WTC11 (cell line): ENCODE measurements at regions of chr15 and their contacts with region 1.

Region 1: GRCh38 chr15:57375827-57376695 is at the start of gene CGNL1:
- DNase-seq: peak; percentile 69
- ATAC-seq: peak; percentile 67
- H3K4me3 Mint-ChIP-seq: peak within 1 kb of the TSS; percentile 90
- H3K27ac Mint-ChIP-seq: peak within 1 kb of the TSS; percentile 94; the same call in 1 of the 2 replicates
- H3K4me1 Mint-ChIP-seq: peaks cover 53% of the 10 kb centered on the region
- H3K27me3 Mint-ChIP-seq: peaks cover 30% of the 10 kb centered on the region
- CTCF ChIP-seq: no peak
- total RNA-seq, gene CGNL1: 57.3 to 69.5 TPM (median 67.1 TPM) in 3 replicates

Region 2: DNA sequence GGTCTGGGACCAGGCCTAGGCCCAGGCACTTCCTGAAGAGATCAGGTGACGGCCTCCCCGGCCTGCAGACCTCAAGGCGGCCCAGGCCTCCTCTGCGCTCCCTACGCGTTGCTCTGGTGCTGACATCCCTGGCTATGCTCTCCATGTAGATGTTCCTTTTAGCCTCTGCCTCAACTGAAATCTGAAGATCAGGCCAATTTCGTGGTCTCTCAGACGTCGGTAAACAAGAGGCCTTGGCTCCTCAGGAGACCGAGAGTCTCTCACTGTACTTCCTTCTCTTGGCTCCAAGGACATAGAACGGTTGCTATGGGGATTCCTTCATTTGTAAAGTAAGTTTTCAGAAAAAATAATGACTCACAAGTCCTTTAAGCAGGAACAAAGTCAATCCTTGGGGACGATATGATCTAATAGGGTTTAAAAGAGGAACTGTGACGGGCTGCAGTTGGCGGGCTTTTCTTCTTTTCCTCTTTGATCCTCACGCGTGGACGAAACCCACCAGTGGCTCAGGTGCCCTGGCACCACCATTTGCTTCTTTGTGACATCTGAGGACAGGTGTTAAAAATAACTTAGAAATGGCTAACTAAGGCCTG is 55.3 kb before region 1 on chr15:
- CTCF ChIA-PET with region 1: no interaction called
- POLR2A ChIA-PET with region 1: no interaction called
- DNase-seq: no peak
- ATAC-seq: peak; percentile 17; the same call in 1 of the 2 replicates
- H3K4me3 Mint-ChIP-seq: no peak overlapping the region
- H3K27ac Mint-ChIP-seq: no peak overlapping the region
- H3K4me1 Mint-ChIP-seq: peaks cover 44% of the 10 kb centered on the region
- H3K27me3 Mint-ChIP-seq: no peaks in the 10 kb centered on the region; the same call in 1 of the 2 replicates
- CTCF ChIP-seq: no peak

Region 3: DNA sequence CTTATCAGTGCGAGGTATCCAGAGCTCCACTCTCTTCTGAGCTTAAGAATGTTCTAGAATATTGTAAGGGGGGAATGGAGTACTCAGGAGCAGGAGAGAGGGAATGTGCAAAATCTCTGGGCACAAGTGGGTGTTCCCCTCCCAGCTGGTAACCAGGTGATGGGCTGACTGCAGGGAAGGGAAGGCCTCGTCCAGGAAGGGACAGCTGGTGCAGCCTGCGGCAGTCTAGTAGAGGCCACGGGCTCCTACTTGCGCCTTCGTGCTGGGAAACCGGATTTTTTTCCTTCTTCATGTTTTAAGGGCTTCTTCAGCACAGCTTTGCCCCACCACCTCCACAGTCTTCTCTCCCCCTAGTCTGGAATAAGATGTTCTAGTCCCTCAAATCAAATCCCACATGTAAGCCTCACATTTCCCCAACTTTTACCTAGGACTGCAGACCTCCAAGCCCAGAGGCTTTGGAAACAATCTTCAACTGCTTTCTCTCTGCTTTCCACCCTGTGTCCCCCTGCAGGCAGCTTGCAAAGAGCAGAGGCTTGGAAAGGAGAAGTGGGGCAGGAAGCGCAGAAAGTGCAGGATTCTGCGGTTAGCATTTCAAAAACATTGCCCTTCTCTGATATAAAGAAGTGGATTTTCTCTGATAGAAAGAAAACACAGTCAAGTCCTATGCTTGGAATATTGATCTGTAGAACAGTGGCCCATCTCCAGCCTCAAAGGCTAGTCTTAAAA is 11.6 kb before region 1 on chr15:
- CTCF ChIA-PET with region 1: interaction called, 17 read pairs
- POLR2A ChIA-PET with region 1: interaction called, 3 read pairs
- DNase-seq: peak; percentile 56
- ATAC-seq: peak; percentile 86
- H3K4me3 Mint-ChIP-seq: no peak overlapping the region
- H3K27ac Mint-ChIP-seq: peak overlapping the region; percentile 81
- H3K4me1 Mint-ChIP-seq: peaks cover 26% of the 10 kb centered on the region
- H3K27me3 Mint-ChIP-seq: no peaks in the 10 kb centered on the region; the same call in 1 of the 2 replicates
- CTCF ChIP-seq: no peak

Region 4: DNA sequence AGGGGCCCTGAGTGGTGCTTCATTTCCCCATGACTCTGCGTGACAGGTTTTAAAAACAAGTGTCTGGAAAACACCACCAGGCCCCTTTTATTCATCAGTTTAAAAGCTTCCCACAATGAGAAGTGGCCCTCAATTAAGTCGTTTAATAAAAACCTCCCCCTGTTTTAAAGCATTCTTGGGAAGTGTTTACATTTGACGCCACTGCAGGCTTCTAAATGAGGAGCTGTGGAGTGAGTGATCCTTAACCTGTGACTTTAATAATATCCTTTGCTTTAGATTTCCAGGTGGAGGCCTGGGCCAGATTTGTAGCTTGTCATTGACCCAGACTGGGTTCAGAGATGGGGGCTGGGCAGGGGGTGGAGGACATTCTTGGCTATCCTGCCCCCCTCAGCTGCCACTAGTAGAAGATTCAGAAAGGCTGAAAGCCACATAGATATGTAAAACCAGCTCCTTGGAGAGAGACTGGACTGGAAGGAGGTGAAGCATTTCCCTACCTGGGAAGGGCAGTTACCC is 11.6 kb after region 1 on chr15:
- CTCF ChIA-PET with region 1: interaction called, 11 read pairs
- POLR2A ChIA-PET with region 1: interaction called, 10 read pairs
- DNase-seq: peak; percentile 59
- ATAC-seq: peak; percentile 71
- H3K4me3 Mint-ChIP-seq: peak overlapping the region; percentile 74
- H3K27ac Mint-ChIP-seq: peak overlapping the region; percentile 97
- H3K4me1 Mint-ChIP-seq: peaks cover 93% of the 10 kb centered on the region
- H3K27me3 Mint-ChIP-seq: no peaks in the 10 kb centered on the region
- CTCF ChIP-seq: no peak

Region 5: GRCh38 chr15:57427367-57427821 is 51.3 kb after region 1 on chr15:
- CTCF ChIA-PET with region 1: interaction called, 10 read pairs
- POLR2A ChIA-PET with region 1: interaction called, 5 read pairs
- DNase-seq: peak; percentile 33
- ATAC-seq: peak; percentile 49
- H3K4me3 Mint-ChIP-seq: peak overlapping the region; percentile 20; the same call in 1 of the 2 replicates
- H3K27ac Mint-ChIP-seq: peak overlapping the region; percentile 97
- H3K4me1 Mint-ChIP-seq: peaks cover 87% of the 10 kb centered on the region
- H3K27me3 Mint-ChIP-seq: no peaks in the 10 kb centered on the region
- CTCF ChIP-seq: no peak